CD4-positive, alpha-beta memory T cell (primary cell): ENCODE measurements at regions of chr14 and their contacts with region 1.

Region 1: GRCh38 chr14:64880221-64881121 is 764 bp upstream of the SPTB start:
- DNase-seq: peak; percentile 44 to 59 (median 47)
- H3K4me3 ChIP-seq: peak overlapping the region in 1 of 2 donors; percentile 57
- H3K4me3 Mint-ChIP-seq: peak overlapping the region; percentile 84 to 94 (median 88)
- H3K27ac ChIP-seq: no peak overlapping the region
- H3K27ac Mint-ChIP-seq: peak overlapping the region in 2 of 7 donors; percentile 15 to 66
- H3K4me1 ChIP-seq: peaks cover 11% of the 10 kb centered on the region
- H3K4me1 Mint-ChIP-seq: peaks cover 0 to 10% (median 9%) of the 10 kb centered on the region in 4 donors
- H3K27me3 ChIP-seq: peaks cover 16% of the 10 kb centered on the region
- H3K27me3 Mint-ChIP-seq: peaks cover 17 to 32% of the 10 kb centered on the region in 2 donors

Region 2: GRCh38 chr14:64835431-64835830 is 45.0 kb before region 1 on chr14:
- CTCF ChIA-PET with region 1: no interaction called
- POLR2A ChIA-PET with region 1: no interaction called
- intact Hi-C with region 1: loop called (anchors 1 kb)
- DNase-seq: no peak
- H3K4me3 ChIP-seq: no peak overlapping the region
- H3K4me3 Mint-ChIP-seq: no peak overlapping the region
- H3K27ac ChIP-seq: no peak overlapping the region
- H3K27ac Mint-ChIP-seq: no peak overlapping the region
- H3K4me1 ChIP-seq: no peaks in the 10 kb centered on the region
- H3K4me1 Mint-ChIP-seq: no peaks in the 10 kb centered on the region
- H3K27me3 ChIP-seq: no peaks in the 10 kb centered on the region
- H3K27me3 Mint-ChIP-seq: peaks cover 14 to 19% of the 10 kb centered on the region in 2 donors

Region 3: DNA sequence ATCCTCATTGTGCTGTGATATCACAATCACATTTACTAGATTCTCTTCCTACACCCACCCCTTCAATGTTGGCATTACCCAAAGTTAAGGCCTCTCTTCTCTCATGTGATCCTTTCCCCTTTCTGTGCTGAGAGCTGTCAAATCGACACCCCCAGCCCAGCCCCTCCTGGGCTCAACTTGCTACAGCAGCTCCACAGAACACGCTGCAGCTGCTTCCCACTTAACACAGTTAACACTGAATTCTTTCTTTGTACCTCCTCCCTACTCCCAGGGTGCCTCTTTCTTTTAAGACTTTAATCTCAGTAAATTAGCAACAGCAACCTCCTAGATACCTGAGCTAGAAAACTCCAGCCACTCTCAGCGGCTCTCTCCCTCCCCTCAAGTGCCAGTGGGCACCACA is 18.6 kb before region 1 on chr14:
- CTCF ChIA-PET with region 1: no interaction called
- POLR2A ChIA-PET with region 1: no interaction called
- intact Hi-C with region 1: no loop called
- DNase-seq: no peak
- H3K4me3 ChIP-seq: no peak overlapping the region
- H3K4me3 Mint-ChIP-seq: no peak overlapping the region
- H3K27ac ChIP-seq: no peak overlapping the region
- H3K27ac Mint-ChIP-seq: no peak overlapping the region
- H3K4me1 ChIP-seq: no peaks in the 10 kb centered on the region
- H3K4me1 Mint-ChIP-seq: peaks cover 0 to 1% (median 0%) of the 10 kb centered on the region in 4 donors
- H3K27me3 ChIP-seq: no peaks in the 10 kb centered on the region
- H3K27me3 Mint-ChIP-seq: peaks cover 9 to 15% of the 10 kb centered on the region in 2 donors